PC-3 (cell line): ENCODE measurements at regions of chr15 and their contacts with region 1.

Region 1: DNA sequence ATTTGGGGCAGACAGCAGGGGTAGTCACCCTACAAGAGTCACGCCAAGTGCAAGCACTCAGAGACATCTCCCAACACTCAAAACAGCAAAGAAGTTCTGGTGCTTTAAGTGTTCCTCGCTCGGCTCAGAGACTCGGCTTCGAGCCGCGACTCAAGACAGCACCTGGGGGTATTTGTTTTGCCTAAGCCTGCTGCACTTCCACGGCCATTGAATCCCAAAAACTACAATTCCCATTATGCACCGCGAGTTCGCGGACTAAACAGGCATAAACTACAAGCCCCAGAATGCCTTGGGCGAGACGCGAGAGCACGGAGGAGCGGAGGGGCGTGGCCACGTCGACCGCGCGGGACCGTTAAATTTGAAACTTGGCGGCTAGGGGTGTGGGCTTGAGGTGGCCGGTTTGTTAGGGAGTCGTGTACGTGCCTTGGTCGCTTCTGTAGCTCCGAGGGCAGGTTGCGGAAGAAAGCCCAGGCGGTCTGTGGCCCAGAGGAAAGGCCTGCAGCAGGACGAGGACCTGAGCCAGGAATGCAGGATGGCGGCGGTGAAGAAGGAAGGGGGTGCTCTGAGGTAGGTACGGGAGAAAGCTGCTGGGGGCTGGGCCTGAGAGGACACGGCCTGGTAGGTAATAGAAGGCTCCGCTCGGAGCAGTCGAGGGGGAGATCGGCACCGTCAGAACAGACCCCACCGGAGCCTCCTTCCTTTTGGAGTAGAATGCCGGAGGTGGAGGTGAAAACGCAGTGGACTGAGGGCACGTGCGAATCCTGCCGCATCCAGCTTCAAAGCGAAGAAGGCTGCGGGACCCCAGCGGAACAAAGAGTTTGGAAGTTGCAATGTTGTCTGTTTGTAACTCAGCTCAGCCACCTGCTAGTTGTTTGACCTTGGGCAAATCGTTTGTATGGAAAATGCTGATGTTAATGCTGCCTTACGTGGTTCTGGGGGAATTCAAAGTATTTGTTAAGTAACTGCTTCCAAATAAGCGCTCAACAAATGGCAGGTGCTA is at the start of gene BUB1B:
- DNase-seq: peak; percentile 98
- ATAC-seq: peak; percentile 89
- H3K4me3 ChIP-seq: peak within 1 kb of the TSS; percentile 83
- H3K27ac ChIP-seq: peak within 1 kb of the TSS; percentile 42
- H3K4me1 ChIP-seq: peaks cover 27% of the 10 kb centered on the region
- H3K27me3 ChIP-seq: no peaks in the 10 kb centered on the region
- CTCF ChIP-seq: no peak
- total RNA-seq, gene BUB1B: 73.0 and 96.4 TPM in 2 replicates

Region 2: DNA sequence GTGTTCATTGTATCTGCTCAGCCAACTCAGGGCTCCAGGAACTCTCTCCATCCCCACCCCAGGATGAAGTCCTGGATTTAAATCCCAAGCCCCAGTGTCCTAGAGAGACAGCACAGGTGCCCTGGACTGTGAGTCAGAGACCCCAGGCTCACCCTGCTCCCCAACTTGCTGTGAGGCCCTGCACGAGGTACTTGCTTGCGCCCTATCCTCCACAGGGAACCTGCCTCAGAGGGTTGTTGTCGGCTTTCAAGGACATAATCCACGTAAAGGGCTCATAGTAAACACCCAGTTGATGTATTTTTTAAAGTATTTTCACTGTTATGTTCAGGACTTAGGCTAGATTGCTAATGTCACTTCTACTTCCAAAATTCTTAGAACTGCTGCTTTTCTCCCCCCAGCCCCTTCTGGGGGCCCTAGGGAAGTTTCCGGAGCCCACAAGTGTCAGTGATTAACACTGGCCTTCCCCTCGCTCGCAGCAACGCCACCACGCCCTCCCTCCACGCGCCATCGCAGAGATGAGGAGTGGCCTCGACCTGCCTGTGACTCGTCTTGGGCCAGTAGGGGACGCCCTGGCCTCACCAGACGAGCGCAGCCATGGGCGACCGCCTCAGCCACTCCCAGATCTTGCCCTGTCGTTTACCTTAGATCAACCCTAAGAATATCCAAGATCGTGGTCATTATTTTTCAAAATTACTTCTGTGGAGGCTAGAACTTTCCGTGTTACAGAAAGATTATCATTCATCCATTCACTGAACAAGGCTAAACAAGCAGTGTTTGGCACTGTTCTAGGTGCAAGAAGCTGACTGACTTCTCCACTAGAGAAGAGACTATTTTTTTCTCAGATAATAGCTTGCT is 116.0 kb before region 1 on chr15:
- CTCF ChIA-PET with region 1: no interaction called
- POLR2A ChIA-PET with region 1: no interaction called
- intact Hi-C with region 1: loop called (anchors 5 kb)
- DNase-seq: peak; percentile 88
- ATAC-seq: peak; percentile 91
- H3K4me3 ChIP-seq: peak overlapping the region; percentile 57
- H3K27ac ChIP-seq: peak overlapping the region; percentile 12; the same call in 1 of the 2 replicates
- H3K4me1 ChIP-seq: peaks cover 39% of the 10 kb centered on the region
- H3K27me3 ChIP-seq: no peaks in the 10 kb centered on the region
- CTCF ChIP-seq: peak; percentile 99